ENCODE measurements at regions of chr11 and their contacts with region 1.

Region 1: GRCh38 chr11:13152736-13153533 is 124.7 kb upstream of the BMAL1 start:
- DNase-seq: peak; percentile 34 to 44
- ATAC-seq: peak in 1 of 2 experiments; percentile 44; a peak in 2 of 6 replicates
- H3K4me3 ChIP-seq: no peak overlapping the region
- H3K27ac ChIP-seq: peak overlapping the region in 1 of 2 experiments; percentile 73; a peak in 4 of 6 replicates
- H3K4me1 ChIP-seq: peaks cover 17% of the 10 kb centered on the region; the same call in 2 of the 3 replicates
- CTCF ChIP-seq: peak; percentile 84
- EP300 ChIP-seq: no peak
- POLR2A ChIP-seq: no peak
- RAD21 ChIP-seq: peak; percentile 91 to 92

Region 2: DNA sequence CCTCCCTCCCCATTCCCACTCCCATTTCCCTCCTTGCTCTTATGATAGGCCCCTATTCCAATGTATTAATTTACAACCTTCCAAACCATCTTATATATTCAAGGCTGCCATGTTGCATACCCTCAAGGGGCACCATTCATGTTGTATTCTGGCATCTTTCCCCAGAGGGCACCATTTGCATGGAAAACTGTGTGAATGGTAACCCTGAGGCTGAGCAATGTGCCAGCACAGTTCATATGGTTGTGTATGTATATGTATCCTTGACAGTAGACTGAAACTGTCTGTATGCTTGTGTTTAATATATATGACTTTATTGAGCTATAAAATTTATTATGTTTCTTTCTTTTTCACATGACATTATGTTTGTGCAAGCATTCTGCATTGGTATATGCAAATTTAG is 136.5 kb before region 1 on chr11:
- CTCF ChIA-PET with region 1: interaction called, 25 read pairs
- POLR2A ChIA-PET with region 1: no interaction called
- DNase-seq: peak in 1 of 2 experiments; percentile 33
- ATAC-seq: peak in 1 of 2 experiments; percentile 74; a peak in 2 of 6 replicates
- H3K4me3 ChIP-seq: no peak overlapping the region
- H3K27ac ChIP-seq: 0 out of 6 replicates have a peak overlapping the region, but pooled peaks of 1 of the 2 experiments have one; percentile 48
- H3K4me1 ChIP-seq: peaks cover 33% of the 10 kb centered on the region
- CTCF ChIP-seq: peak; percentile 37
- EP300 ChIP-seq: no peak
- POLR2A ChIP-seq: no peak
- RAD21 ChIP-seq: peak; percentile 56 to 76; a peak in 4 of 5 replicates

Region 3: GRCh38 chr11:13140028-13140870 is 12.7 kb before region 1 on chr11:
- CTCF ChIA-PET with region 1: interaction called, 10 read pairs
- POLR2A ChIA-PET with region 1: no interaction called
- DNase-seq: peak; percentile 81 to 96
- ATAC-seq: peak; percentile 92 to 94
- H3K4me3 ChIP-seq: no peak overlapping the region
- H3K27ac ChIP-seq: peak overlapping the region; percentile 98 to 99
- H3K4me1 ChIP-seq: peaks cover 45% of the 10 kb centered on the region
- CTCF ChIP-seq: no peak
- EP300 ChIP-seq: peak; percentile 90 to 95; a peak in 4 of 5 replicates
- POLR2A ChIP-seq: no peak
- RAD21 ChIP-seq: peak; percentile 32 to 64; a peak in 4 of 5 replicates